ENCODE measurements at regions of chr5 and their contacts with region 1.

Region 1: GRCh38 chr5:17132444-17133083 is 84.9 kb upstream of the BASP1 start:
- DNase-seq: peak; percentile 43

Region 2: DNA sequence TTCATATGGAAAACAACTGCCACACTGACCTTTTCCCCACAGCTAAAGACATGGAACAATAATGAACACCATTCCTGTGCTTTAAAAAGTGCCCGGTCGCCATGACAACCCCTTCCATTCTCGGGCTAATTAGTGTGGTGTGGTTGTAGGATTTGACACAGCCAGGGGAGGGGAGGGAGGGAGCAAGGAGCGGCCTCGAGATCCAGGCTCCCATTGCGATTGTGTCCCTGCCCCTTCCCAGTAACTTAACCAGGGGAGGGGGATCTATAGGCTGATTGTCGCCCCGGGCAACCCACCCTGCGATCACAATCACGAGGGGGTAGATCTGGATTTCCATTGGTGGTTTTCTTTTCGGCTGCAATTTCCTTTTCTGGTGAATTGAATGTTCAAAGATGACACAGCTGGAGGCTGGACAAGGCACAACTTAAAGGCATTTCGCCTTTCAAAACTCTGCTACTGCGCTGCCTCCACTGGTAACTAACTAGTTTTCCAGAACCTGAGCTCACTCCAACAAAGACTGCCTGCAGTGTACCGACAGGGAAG is 419.1 kb before region 1 on chr5:
- CTCF ChIA-PET with region 1: no interaction called
- POLR2A ChIA-PET with region 1: no interaction called
- DNase-seq: no peak

Region 3: DNA sequence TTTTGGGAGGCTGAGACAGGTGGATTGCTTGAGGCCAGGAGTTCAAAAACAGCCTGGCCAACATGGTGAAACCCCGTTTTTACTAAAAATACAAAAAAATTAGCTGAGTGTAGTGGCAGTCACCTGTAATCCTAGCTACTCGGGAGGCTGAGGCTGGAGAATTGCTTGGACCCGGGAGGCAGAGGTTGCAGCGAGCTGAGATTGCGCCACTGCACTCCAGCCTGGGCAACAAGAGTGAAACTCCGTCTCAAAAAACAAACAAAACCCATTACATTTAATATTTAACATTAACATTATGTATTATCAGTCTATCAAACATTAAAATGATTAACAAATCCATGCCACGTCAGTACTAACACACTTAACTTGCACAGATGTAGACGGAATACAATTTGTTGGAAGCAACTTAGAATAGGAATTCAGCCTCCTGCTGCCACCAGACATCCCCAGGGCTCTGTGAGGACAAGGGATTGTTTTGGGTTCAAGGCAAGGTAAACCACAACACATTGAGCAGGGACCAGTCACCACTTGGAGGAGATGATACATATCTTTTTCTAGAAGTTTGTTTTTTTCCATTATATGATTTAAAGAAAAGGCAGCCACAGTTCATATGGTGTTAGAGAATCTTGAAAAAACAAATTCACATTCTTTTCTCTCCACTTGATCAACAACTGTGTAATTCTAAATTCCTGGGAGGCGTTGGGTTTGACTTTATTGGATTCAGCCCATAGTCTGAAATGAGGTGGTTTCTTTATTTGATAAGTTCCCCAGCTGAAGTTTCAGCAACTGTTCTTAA is 19.2 kb before region 1 on chr5:
- CTCF ChIA-PET with region 1: interaction called, 37 read pairs
- POLR2A ChIA-PET with region 1: no interaction called
- DNase-seq: no peak

Region 4: GRCh38 chr5:17118631-17119030 is 13.9 kb before region 1 on chr5:
- CTCF ChIA-PET with region 1: interaction called, 37 read pairs
- POLR2A ChIA-PET with region 1: no interaction called
- DNase-seq: peak; percentile 35

Region 5: GRCh38 chr5:17477573-17478265 is 345.2 kb after region 1 on chr5:
- CTCF ChIA-PET with region 1: interaction called, 12 read pairs
- POLR2A ChIA-PET with region 1: no interaction called
- DNase-seq: no peak